Activated T-helper 1 cell treated with anti-CD3 and anti-CD28 coated beads, Interleukin-12 subunit alpha, Interleukin-12 subunit beta, Interleukin-2, Interleukin-4 antibody, amounts not matched to agents 30 ng/mL and 10 ng/mL and 1 ng/mL, durations not matched to agents 14 hours and 24 hours and 36 hours (primary cell): ENCODE measurements at regions of chr16 and their contacts with region 1.

Region 1: GRCh38 chr16:30526823-30527635 is 663 bp upstream of the ZNF768 start:
- DNase-seq: peak; percentile 93
- H3K4me3 Mint-ChIP-seq: peak overlapping the region; percentile 84
- H3K27ac Mint-ChIP-seq: peak overlapping the region; percentile 54
- H3K4me1 Mint-ChIP-seq: peaks cover 46% of the 10 kb centered on the region
- H3K27me3 Mint-ChIP-seq: no peaks in the 10 kb centered on the region

Region 2: DNA sequence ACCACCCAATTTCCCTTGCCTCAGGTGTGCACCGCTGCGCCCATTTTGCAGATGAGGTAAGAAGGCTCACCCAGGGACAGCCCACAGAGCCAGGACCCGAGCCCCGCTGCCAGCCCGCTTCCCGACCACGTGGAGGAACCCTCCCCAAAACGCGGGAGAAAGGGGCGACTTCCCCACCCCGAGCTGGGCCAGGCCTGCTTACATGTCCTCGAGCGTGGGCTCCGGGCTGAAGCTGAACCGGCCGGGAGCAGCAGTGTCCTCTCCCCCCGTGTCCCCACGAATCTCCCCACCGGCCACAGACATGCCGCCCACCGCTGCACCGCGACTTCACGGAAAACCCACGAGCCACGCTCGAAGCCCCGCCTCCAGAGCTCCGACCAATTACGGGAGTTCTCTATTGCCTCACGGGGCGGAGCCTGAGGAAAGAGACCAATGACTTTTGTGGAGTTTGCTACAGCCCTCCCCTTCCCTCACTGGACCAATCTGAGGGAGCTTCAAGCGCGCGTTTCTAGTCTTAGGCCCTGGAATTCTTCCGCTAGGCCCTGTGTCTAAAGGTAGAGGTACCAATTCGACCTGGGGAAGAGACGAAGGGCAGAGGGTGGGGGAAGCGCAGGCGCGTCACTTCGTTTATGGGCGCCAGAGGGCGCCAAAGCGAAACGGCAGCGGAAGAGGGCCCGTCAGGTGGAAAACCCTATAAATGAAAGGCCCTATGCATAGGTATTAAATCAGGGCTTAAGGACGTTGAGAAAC is 97.2 kb before region 1 on chr16 and contains the start of gene DCTPP1:
- intact Hi-C with region 1: loop called (anchors 1 kb)
- DNase-seq: peak; percentile 96
- H3K4me3 Mint-ChIP-seq: no peak within 1 kb of the TSS
- H3K27ac Mint-ChIP-seq: no peak within 1 kb of the TSS
- H3K4me1 Mint-ChIP-seq: peaks cover 31% of the 10 kb centered on the region
- H3K27me3 Mint-ChIP-seq: no peaks in the 10 kb centered on the region
- total RNA-seq, gene DCTPP1: 173 and 178 TPM in 2 replicates

Region 3: GRCh38 chr16:30472328-30472942 is 54.6 kb before region 1 on chr16 and contains the start of gene ITGAL:
- intact Hi-C with region 1: loop called (anchors 1 kb)
- DNase-seq: peak; percentile 81
- H3K4me3 Mint-ChIP-seq: peak within 1 kb of the TSS; percentile 96
- H3K27ac Mint-ChIP-seq: peak within 1 kb of the TSS; percentile 95
- H3K4me1 Mint-ChIP-seq: peaks cover 60% of the 10 kb centered on the region
- H3K27me3 Mint-ChIP-seq: no peaks in the 10 kb centered on the region
- total RNA-seq, gene ITGAL: 259 and 287 TPM in 2 replicates

Region 4: GRCh38 chr16:30585400-30586189 is 58.6 kb after region 1 on chr16 and contains the start of gene ZNF785:
- intact Hi-C with region 1: loop called (anchors 5 kb)
- DNase-seq: peak; percentile 93
- H3K4me3 Mint-ChIP-seq: peak within 1 kb of the TSS; percentile 89
- H3K27ac Mint-ChIP-seq: peak within 1 kb of the TSS; percentile 87
- H3K4me1 Mint-ChIP-seq: peaks cover 18% of the 10 kb centered on the region
- H3K27me3 Mint-ChIP-seq: no peaks in the 10 kb centered on the region
- total RNA-seq, gene ZNF785: 19.2 and 21.5 TPM in 2 replicates

Region 5: DNA sequence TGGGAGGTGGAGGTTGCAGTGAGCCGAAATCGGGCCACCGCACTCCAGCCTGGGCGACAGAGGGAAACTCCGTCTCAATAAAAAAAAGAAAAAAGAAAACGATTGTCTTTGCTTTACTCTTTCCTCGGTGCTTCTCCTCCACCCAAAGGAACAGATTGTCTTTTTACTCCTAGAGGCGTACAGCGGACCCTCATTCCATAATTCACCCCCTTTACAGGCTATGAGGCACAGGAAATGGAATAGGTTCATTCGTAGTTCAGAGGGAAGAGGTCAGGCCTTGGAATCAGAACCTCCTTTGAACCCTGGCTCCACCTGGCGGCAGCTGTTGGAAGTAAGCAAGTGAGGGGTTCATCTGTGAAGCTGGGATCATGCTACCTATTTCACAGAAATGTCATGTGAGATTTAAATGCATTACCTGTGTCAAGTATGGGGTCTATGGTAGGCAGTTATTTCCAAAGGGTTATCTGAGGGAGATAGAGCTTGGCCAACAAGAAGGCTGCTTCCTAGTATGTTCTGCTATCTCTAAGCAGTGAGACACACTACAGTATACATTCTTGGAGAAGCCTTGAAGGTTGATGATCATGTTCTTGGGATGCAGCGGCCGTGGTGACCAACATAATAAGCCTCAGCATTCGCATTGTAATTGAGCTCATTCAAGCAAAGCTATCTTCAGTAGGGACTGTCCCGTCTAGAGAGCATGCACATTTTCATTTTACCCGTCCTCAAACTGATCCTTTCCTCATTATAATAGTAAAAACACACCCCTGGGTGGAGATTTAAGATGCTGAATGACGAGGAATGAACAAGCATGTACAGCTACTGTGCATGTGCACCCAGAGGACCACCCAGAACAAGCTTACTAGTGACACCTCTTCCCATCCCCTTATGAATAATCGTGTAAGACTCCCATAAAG is 101.9 kb after region 1 on chr16:
- intact Hi-C with region 1: loop called (anchors 1 kb)
- DNase-seq: peak; percentile 77
- H3K4me3 Mint-ChIP-seq: peak overlapping the region; percentile 52
- H3K27ac Mint-ChIP-seq: peak overlapping the region; percentile 71
- H3K4me1 Mint-ChIP-seq: peaks cover 10% of the 10 kb centered on the region
- H3K27me3 Mint-ChIP-seq: no peaks in the 10 kb centered on the region